ENCODE measurements at regions of chr1 and their contacts with region 1.

Region 1: GRCh38 chr1:31891280-31891679 is 46.9 kb downstream of the PTP4A2 start:
- DNase-seq: no peak
- ATAC-seq: no peak
- H3K4me3 Mint-ChIP-seq: no peak overlapping the region
- H3K27ac Mint-ChIP-seq: no peak overlapping the region
- H3K4me1 Mint-ChIP-seq: peaks cover 28% of the 10 kb centered on the region
- H3K27me3 Mint-ChIP-seq: no peaks in the 10 kb centered on the region
- CTCF ChIP-seq: no peak

Region 2: DNA sequence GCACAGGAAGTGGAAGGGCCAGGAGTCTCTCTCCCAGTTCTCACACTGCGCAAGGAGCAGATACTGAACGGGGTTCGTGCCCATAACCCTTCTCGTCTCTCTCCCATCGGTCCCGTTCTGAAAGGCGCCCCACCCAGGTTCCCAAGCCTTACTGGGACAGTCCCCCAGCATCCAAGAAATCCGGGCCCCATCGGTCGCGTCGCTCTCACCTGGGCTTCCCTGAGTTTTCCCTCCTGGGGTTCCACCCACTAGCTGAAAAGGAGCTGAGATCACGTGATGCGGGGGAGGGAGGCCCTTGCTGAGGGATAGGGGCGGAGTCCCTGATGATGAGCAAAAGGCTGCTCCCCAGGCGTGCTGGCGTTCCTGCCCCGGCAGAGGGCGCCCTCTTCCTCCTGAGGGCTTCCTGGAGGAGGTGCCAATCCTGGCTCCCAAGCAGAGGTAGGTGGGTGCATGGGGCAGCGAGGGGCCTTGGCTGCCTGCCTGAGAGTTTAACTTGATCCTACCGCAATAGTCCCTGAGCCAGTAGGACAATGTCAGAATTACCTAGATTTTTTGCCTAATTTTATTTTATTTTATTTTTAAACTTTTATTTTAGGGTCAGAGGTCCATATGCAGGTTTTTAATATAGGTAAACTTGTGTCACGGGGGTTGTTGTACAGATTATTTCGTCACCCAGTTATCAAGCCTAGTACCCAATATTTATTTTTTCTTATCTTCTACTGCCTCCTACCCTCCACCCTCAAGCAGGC is 75.4 kb before region 1 on chr1 and contains the start of gene SPOCD1:
- CTCF ChIA-PET with region 1: no interaction called
- POLR2A ChIA-PET with region 1: no interaction called
- intact Hi-C with region 1: no loop called
- DNase-seq: peak; percentile 55
- ATAC-seq: peak; percentile 81
- H3K4me3 Mint-ChIP-seq: no peak within 1 kb of the TSS
- H3K27ac Mint-ChIP-seq: no peak within 1 kb of the TSS
- H3K4me1 Mint-ChIP-seq: peaks cover 26% of the 10 kb centered on the region
- H3K27me3 Mint-ChIP-seq: no peaks in the 10 kb centered on the region
- CTCF ChIP-seq: no peak
- total RNA-seq, gene SPOCD1: not detected in 2 replicates

Region 3: DNA sequence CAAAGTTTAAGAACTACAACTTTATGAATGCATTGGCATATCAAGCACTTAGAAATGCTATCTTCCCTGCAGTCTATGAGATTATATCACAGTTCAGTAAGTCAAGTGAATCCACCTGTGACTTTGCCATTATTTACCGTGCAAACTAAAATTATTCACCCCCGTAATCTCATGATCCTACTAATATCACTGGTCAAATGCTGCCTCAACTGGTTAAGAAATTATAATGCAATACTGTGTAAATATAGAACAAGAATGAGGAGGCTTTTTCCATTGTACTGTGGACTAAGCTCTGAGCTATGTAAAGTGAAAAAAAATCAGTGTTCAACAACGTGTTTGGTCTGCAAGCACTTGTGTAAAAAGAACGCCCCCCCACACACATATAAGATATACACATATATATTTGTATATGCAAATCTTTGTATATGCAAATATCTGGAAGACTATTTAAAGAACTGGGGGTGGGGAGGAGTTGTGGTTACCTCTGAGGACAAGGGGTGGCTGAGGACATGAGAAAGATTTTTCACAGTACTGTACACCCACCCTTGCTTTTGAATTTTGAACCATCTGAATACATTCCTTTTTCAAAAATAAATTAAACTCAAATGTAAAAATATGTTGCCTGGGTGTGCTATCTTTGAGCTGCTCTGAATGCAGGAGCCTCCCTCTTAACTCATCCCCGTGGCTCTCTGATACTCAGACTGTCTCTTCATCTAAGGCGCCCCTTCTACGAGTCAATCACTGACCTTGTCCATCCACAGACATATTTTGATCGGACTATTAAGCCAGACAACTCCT is 10.2 kb before region 1 on chr1:
- CTCF ChIA-PET with region 1: no interaction called
- POLR2A ChIA-PET with region 1: interaction called, 4 read pairs
- intact Hi-C with region 1: loop called (anchors 1 kb)
- DNase-seq: no peak
- ATAC-seq: peak; percentile 74
- H3K4me3 Mint-ChIP-seq: peak overlapping the region; percentile 62
- H3K27ac Mint-ChIP-seq: peak overlapping the region; percentile 51
- H3K4me1 Mint-ChIP-seq: peaks cover 55% of the 10 kb centered on the region
- H3K27me3 Mint-ChIP-seq: no peaks in the 10 kb centered on the region
- CTCF ChIP-seq: no peak

Region 4: DNA sequence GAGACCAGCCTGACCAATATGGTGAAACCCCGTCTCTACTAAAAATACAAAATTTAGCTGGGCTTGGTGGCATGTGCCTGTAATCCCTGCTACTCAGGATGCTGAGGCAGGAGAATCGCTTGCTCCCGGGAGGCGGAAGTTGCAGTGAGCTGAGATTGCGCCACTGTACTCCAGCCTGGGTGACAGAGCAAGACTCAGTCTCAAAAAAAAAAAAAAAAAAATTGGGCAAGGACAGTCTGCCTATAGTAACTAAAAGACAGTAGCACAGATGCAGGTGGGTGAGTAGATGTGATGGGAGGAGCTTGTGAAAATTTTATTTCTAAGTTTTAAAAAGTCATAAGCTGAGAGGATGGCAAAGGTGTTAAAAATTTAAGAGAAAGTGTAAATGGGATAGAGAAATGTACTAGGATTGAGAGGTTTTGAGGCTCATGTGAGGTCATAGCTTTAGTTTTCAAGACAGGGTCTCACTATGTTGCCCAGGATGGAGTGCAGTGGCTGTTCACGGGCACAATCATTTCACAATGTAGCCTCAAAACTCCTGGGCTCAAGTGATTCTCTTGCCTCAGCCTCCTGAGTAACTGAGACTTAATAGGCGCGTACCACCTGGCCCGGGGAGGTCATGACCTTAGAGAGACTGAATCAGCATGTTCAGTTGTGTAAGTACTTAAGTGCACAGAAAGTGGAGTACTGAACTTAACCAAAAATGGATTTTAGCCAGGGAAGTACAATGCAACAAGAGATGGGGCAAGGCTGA is 13.2 kb after region 1 on chr1:
- CTCF ChIA-PET with region 1: interaction called, 4 read pairs
- POLR2A ChIA-PET with region 1: interaction called, 7 read pairs
- intact Hi-C with region 1: loop called (anchors 1 kb)
- DNase-seq: no peak
- ATAC-seq: no peak
- H3K4me3 Mint-ChIP-seq: no peak overlapping the region
- H3K27ac Mint-ChIP-seq: peak overlapping the region; percentile 32
- H3K4me1 Mint-ChIP-seq: peaks cover 28% of the 10 kb centered on the region
- H3K27me3 Mint-ChIP-seq: no peaks in the 10 kb centered on the region
- CTCF ChIP-seq: no peak

Region 5: DNA sequence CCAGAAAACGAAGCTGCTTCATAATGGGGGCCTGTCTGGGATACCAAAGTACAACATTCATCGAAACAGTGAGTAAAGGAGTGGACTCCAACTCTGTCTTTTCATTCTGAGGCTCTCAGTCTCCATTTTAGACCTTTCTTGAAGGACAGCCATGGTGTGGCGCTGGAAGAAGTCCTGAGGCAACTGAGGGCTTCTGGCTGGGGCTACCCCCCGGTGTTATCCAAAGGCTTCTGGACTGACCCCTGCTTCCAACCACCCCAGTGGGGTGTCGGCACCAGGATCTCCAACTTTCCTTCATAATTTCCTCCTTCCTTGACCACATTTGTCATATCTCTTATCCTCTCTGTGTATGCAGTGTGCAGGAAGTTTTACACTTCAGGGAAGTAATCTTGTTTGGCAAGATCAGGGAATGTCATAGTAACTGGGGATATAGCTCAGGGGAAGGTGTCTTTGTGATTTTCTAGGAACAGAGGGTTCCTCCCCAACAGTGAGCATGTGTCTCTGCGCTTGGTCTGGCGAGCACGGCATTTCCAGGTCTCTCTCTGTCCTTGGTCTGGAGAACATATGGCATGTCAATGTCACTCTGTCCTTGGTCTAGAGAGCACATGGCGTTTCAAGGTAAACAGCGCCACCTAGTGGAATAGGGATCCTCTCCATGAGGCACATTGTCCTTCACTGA is 522.4 kb after region 1 on chr1:
- CTCF ChIA-PET with region 1: no interaction called
- POLR2A ChIA-PET with region 1: no interaction called
- intact Hi-C with region 1: no loop called
- DNase-seq: peak; percentile 28
- ATAC-seq: peak; percentile 88
- H3K4me3 Mint-ChIP-seq: no peak overlapping the region
- H3K27ac Mint-ChIP-seq: no peak overlapping the region
- H3K4me1 Mint-ChIP-seq: peaks cover 3% of the 10 kb centered on the region
- H3K27me3 Mint-ChIP-seq: peaks cover 15% of the 10 kb centered on the region
- CTCF ChIP-seq: no peak